ENCODE measurements at regions of chr2 and their contacts with region 1.

Region 1: DNA sequence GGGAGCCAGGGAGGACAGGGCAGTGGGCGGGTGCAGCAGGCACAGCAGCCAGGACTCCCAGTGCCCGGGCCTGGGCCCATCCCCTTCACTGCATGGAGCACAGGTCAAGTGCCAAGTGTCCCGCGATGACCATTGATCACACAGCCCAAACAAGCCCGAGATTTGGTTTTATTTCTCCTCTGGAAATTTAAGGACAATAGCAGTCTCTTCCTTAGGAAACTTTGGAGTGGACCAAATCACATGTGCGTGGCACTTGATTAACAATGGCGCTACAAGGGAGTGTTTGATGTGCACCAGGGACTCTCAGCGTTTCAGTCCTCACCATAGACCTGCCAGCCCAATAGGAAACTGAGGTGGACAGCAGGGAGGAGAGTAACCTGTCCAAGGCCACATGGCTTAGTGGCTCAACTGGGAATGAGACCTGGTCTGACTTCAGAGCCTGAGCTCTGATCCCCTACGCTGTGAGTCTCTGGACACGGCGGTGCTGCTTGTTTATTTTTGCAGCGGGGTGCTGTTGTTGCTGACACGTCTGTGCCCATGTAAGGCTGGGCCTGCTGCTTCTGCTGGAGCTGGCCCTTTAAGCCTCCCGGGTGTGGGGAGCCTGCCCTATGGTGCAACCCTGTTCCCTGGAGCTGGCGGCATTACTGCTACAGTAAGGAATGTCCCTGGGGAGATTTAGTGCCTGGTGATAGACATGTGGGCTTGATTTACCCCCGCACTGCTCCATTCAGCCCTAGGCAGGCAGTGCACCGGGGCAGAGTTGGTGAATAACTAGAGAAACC is 194.2 kb downstream of the INHBB start:
- DNase-seq: no peak
- H3K4me3 ChIP-seq: no peak overlapping the region
- H3K27ac ChIP-seq: peak overlapping the region; percentile 41
- H3K4me1 ChIP-seq: peaks cover 37% of the 10 kb centered on the region
- H3K27me3 ChIP-seq: no peaks in the 10 kb centered on the region
- CTCF ChIP-seq: no peak
- POLR2A ChIP-seq: no peak

Region 2: DNA sequence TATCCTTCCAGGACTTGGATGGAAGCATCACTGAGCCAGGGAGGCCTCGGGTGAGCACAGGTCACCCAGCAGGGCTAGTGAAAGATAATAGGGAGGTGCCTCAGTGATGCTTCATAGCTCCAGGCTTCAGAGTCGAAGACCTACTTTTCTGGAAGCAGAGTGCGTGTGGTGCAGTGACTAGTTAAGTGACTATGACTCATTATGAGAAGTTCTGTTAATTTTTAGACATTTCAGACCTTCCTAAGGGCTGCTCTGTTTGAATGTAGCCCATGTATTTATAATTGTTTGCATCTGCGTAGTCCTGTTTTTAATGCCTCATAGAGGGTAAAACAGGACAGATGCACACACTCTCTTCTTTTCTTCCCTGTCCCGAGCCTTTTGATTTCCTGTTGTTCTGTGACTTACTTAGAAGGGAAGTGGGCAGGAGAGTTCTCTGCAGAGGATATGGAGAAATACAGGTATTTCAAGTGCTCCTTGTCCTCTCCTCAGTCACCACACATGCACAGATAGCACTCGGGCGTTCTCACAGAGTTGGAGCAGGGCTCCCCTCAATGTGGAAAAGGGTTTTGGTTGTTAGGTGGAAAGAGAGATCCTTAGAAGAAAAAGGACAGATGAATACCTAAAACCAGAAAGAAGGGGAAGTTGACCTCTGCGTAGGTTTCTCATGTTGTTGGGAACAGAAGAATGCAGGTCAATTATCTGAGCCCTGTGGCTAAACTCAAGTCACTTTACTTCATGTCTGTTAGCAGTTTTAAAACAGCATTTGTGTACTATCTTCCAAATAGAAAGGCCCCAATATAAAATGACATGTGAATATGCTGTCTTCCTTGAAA is 252.7 kb before region 1 on chr2:
- intact Hi-C with region 1: no loop called
- DNase-seq: no peak
- H3K4me3 ChIP-seq: no peak overlapping the region
- H3K27ac ChIP-seq: peak overlapping the region; percentile 38
- H3K4me1 ChIP-seq: peaks cover 11% of the 10 kb centered on the region
- H3K27me3 ChIP-seq: no peaks in the 10 kb centered on the region
- CTCF ChIP-seq: no peak
- POLR2A ChIP-seq: no peak

Region 3: DNA sequence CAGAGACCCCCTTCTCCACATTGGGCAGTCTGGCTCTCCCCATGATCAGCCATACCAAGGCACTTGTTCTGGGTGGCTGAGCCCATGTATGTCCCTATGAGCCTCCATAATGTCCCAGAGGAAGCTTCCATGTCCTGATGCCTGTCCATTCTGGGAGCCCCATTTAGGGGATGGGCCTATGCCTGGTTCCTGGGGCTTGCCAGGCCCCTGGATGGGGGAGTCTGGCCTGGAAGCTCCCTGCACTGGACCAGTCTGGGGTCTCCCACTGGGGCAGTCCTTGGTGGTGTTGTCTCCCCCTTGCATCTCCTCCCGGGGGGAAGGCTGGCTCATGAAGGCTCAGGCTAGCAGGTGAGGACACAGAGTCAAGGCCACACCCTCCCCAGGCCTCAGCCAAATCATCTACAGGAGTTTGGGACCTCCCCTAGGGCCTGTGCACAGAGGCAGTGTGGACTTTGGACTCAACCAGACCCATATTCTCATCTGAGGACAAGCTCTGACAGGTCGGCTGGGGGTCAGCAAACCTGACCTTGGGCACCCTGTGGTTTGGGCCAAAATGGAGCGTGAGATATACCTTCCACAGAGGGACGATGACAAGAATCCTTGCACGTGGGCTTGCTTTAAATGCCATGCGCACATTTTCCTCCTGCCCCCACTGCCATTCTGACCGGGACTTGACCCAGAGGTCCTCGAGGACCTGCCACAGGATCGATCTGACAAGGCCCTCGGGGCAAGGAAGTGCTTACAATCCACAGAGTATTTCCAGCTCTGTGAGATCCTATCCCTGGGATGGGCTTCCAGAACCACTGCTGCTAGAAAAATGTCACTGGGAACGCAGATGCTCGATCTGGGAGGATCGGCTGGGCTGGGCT is 155.4 kb before region 1 on chr2:
- intact Hi-C with region 1: no loop called
- DNase-seq: no peak
- H3K4me3 ChIP-seq: no peak overlapping the region
- H3K27ac ChIP-seq: no peak overlapping the region
- H3K4me1 ChIP-seq: no peaks in the 10 kb centered on the region
- H3K27me3 ChIP-seq: no peaks in the 10 kb centered on the region
- CTCF ChIP-seq: no peak
- POLR2A ChIP-seq: no peak

Region 4: GRCh38 chr2:120465989-120466703 is 74.0 kb before region 1 on chr2:
- intact Hi-C with region 1: loop called (anchors 5 kb)
- DNase-seq: no peak
- H3K4me3 ChIP-seq: no peak overlapping the region
- H3K27ac ChIP-seq: no peak overlapping the region
- H3K4me1 ChIP-seq: peaks cover 51% of the 10 kb centered on the region
- H3K27me3 ChIP-seq: no peaks in the 10 kb centered on the region
- CTCF ChIP-seq: no peak
- POLR2A ChIP-seq: no peak

Measured in vagina (tissue), 2 donors.